Activated CD4-positive, alpha-beta T cell treated with anti-CD3 and anti-CD28 coated beads, Interleukin-2, amount 10 ng/mL, durations not matched to agents 24 days and 14 days (primary cell): ENCODE measurements at regions of chr3 and their contacts with region 1.

Region 1: GRCh38 chr3:149009732-149010131 is 18.4 kb downstream of the GYG1 start:
- DNase-seq: peak; percentile 84
- H3K4me3 Mint-ChIP-seq: peak overlapping the region; percentile 31
- H3K27ac Mint-ChIP-seq: peak overlapping the region; percentile 64
- H3K4me1 Mint-ChIP-seq: peaks cover 22% of the 10 kb centered on the region
- H3K27me3 Mint-ChIP-seq: no peaks in the 10 kb centered on the region

Region 2: GRCh38 chr3:148991194-148992026 is 18.3 kb before region 1 on chr3 and contains the start of gene GYG1:
- intact Hi-C with region 1: loop called (anchors 2 kb)
- DNase-seq: peak; percentile 93
- H3K4me3 Mint-ChIP-seq: peak within 1 kb of the TSS; percentile 82
- H3K27ac Mint-ChIP-seq: peak within 1 kb of the TSS; percentile 87
- H3K4me1 Mint-ChIP-seq: peaks cover 25% of the 10 kb centered on the region
- H3K27me3 Mint-ChIP-seq: no peaks in the 10 kb centered on the region
- total RNA-seq, gene GYG1: 27.4 and 28.0 TPM in 2 replicates

Region 3: DNA sequence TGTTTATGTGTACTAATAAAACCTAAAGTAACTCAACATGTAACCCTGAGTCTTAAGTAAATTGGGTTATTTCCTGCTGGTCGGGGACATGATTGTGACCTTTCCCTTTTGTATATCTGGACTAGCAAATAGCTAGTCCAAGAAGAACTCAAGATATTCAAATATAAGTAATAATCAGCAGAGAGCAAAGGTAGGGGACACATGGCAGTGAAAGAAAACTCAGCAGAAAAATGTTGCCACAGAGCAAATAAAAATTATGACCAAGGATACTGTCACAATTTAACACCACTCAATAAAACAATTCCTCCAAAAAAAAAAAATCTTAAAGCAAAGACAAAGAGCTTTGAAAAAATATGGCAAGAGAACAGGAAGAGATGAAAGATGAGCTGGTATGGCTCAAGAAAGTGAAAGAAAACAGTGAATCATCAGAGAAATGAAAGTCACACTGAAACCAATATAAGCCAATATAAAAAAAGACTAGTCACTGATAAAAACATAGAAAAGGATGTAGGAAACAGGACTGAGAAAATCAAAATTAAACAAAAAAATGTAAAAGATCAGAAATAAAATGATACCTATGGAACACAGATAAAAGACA is 33.2 kb after region 1 on chr3:
- intact Hi-C with region 1: loop called (anchors 5 kb)
- DNase-seq: no peak
- H3K4me3 Mint-ChIP-seq: peak overlapping the region; percentile 58
- H3K27ac Mint-ChIP-seq: peak overlapping the region; percentile 64
- H3K4me1 Mint-ChIP-seq: peaks cover 22% of the 10 kb centered on the region
- H3K27me3 Mint-ChIP-seq: no peaks in the 10 kb centered on the region

Region 4: GRCh38 chr3:150449169-150449721 is 1439.5 kb after region 1 on chr3:
- intact Hi-C with region 1: no loop called
- DNase-seq: no peak
- H3K4me3 Mint-ChIP-seq: no peak overlapping the region
- H3K27ac Mint-ChIP-seq: no peak overlapping the region
- H3K4me1 Mint-ChIP-seq: peaks cover 17% of the 10 kb centered on the region
- H3K27me3 Mint-ChIP-seq: no peaks in the 10 kb centered on the region